ENCODE measurements at regions of chr16 and their contacts with region 1.

Region 1: DNA sequence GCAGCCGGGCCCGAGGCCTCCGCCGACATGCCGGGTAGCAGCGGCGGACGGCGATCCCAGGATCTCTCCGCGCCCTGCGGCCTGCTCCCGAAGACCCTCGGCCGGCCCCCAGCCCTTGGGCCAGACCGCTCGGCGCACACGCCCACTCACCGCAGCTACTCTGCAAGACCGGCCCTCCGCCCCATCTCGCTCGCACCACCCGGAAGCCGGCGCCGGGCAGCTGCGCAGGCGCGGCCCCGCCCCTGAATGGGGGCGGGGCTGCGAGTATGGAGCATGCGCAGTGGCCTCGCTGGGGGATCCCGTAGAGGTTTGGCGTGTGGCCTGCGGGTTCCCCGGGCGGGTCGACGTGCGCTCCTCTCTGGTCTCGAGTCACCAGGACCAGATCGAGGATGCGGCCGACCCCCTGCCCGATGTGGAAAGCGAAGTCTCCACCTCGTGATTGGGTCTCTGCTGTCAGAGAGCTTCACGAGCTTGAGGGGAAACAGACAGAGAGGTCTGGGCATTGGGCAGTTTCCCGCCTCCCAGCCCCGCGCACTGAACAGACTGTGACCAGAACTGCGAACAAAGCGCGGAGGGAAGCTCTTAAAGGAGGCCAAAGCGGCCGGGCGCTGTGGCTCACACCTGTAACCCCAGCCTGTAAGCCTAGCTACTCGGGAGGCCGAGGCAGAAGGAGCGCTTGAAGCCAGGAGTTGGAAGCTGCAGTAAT is at the start of gene KCTD13:
- DNase-seq: peak; percentile 76 to 89 (median 88)
- H3K4me3 ChIP-seq: peak within 1 kb of the TSS; percentile 58 to 88 (median 72)
- H3K27ac ChIP-seq: peak within 1 kb of the TSS; percentile 58 to 93 (median 84)
- H3K4me1 ChIP-seq: peaks cover 26 to 31% of the 10 kb centered on the region in 2 donors
- H3K27me3 ChIP-seq: no peaks in the 10 kb centered on the region
- CTCF ChIP-seq: no peak
- POLR2A ChIP-seq: peak; percentile 60 to 88
- total RNA-seq, gene KCTD13: 6.2 to 39.4 (median 20.6) TPM

Region 2: DNA sequence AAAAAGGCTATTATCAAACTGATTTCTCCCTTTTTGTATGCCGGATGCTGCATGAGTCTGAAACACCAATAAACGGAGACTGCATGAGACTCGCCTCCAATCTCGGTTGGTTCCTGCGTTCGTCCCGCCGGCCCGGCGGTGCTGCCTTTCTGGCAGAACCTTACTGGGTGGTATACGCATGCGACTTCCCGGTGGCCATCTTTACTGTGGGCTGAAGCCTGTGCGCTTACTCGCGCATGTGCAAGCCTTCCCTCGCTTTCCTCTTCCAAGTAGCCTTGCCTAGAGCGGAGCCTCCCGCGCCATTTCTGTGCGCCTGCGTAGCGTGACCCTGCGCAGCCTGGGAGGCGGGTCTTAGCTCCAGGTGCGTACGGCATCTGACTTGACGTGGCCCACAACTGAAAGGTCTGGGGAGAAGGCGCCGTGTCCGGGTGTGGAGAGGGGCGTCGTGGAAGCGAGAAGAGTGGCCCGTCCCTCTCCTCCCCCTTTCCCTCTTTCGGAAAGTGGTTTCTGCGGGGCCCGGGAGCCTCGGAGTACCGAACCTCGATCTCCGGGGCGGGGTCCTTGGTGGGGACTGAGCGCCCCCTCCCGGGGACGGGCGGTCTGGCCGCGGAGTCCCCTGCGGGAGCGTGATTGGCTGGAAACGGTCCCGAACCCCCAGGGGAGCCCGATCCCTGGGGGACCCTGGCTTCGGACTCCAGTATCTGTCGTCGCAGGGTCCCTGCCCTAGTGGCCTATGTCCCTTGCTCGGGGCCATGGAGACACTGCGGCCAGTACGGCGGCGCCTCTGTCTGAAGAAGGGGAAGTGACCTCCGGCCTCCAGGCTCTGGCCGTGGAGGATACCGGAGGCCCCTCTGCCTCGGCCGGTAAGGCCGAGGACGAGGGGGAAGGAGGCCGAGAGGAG is 110.1 kb before region 1 on chr16 and contains the start of gene PAGR1:
- intact Hi-C with region 1: no loop called
- DNase-seq: peak; percentile 98 to 100 (median 99)
- H3K4me3 ChIP-seq: peak within 1 kb of the TSS; percentile 58 to 92 (median 78)
- H3K27ac ChIP-seq: peak within 1 kb of the TSS; percentile 73 to 99 (median 97)
- H3K4me1 ChIP-seq: peaks cover 23 to 56% of the 10 kb centered on the region in 2 donors
- H3K27me3 ChIP-seq: no peaks in the 10 kb centered on the region
- CTCF ChIP-seq: peak; percentile 68 to 89 (median 80)
- POLR2A ChIP-seq: peak; percentile 51 to 79
- total RNA-seq, gene PAGR1: 17.1 to 47.1 (median 39.8) TPM

Region 3: GRCh38 chr16:29831490-29831889 is 94.7 kb before region 1 on chr16:
- intact Hi-C with region 1: no loop called
- DNase-seq: peak in 5 of 7 donors; percentile 51 to 74 (median 63)
- H3K4me3 ChIP-seq: no peak overlapping the region
- H3K27ac ChIP-seq: peak overlapping the region in 3 of 5 donors; percentile 9 to 93 (median 30)
- H3K4me1 ChIP-seq: peaks cover 12 to 46% of the 10 kb centered on the region in 2 donors
- H3K27me3 ChIP-seq: no peaks in the 10 kb centered on the region
- CTCF ChIP-seq: no peak
- POLR2A ChIP-seq: no peak

Region 4: GRCh38 chr16:29973384-29974246 is 47.5 kb after region 1 on chr16 and contains the start of gene TAOK2:
- intact Hi-C with region 1: loop called in 1 of 2 experiments (anchors 5 kb)
- DNase-seq: peak; percentile 98 to 99 (median 99)
- H3K4me3 ChIP-seq: peak within 1 kb of the TSS; percentile 54 to 87 (median 70)
- H3K27ac ChIP-seq: peak within 1 kb of the TSS; percentile 23 to 87 (median 81)
- H3K4me1 ChIP-seq: peaks cover 21 to 39% of the 10 kb centered on the region in 2 donors
- H3K27me3 ChIP-seq: no peaks in the 10 kb centered on the region
- CTCF ChIP-seq: no peak
- POLR2A ChIP-seq: peak; percentile 42 to 72
- total RNA-seq, gene TAOK2: 40.0 to 95.0 (median 73.4) TPM

Region 5: DNA sequence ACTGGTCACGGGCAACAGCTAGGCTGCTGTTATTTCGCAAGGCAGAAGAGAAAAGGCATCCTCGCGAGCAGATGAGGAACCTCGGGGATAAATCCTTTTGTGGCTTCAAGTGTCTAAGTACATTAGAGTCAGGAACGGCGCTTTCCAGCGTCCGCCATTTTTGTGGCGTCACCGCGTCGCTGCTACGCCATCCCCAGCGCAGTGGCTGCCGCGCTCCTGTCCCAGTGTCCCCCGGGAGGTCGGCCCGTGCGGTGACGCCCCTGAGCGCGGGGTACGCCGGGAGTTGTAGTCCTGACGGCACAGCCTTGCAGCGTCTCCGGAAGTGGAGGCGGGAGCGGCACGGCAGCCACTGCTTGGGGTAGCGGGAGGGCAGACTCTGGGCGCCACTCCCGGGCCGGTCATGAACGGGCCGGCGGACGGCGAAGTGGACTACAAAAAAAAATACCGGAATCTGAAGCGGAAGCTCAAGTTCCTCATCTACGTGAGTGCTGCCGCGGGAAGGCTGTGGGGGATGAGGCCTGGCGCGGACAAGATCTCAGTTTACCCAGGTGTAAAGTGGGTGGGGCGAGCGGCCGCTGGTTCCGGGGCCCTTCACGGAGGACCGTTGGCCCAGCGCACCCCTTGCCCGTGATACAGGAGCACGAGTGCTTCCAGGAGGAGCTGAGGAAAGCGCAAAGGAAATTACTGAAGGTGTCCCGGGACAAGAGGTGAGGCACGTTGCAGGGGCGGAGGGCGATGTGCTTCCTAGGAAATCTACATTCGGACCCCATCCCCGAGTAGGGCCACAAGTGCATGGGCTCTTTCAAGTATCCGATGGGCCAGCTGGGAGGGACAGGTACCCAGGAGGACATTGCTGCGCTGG is 70.0 kb after region 1 on chr16 and contains the start of gene INO80E:
- intact Hi-C with region 1: loop called in 1 of 2 experiments (anchors 10 kb)
- DNase-seq: peak; percentile 98 to 99 (median 99)
- H3K4me3 ChIP-seq: peak within 1 kb of the TSS; percentile 30 to 83 (median 51)
- H3K27ac ChIP-seq: peak within 1 kb of the TSS; percentile 82 to 97 (median 94)
- H3K4me1 ChIP-seq: peaks cover 17 to 24% of the 10 kb centered on the region in 2 donors
- H3K27me3 ChIP-seq: no peaks in the 10 kb centered on the region
- CTCF ChIP-seq: no peak
- POLR2A ChIP-seq: peak in 1 of 2 donors; percentile 65
- total RNA-seq, gene INO80E: 31.8 to 120 (median 71.2) TPM